Heart right ventricle (tissue), 16 donors: ENCODE measurements at regions of chr5 and their contacts with region 1.

Region 1: DNA sequence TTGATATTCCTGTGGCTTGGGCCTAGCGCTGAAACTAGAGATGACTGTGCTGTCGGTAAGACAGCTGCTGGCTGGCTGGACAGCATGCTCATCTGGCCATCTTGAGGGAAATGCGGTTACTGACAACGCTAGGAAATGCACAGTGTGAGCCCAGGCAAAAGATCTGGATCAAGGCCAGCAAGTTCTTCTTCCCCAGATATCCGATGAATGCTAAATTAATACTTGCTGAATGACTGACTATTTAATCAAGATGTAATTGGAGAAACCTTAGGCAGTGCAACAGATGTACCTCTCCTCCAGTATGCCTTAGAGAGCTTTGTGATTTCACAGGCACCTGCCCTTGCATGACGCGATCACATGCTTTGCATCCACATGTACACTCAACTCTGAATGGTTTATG is 659.1 kb downstream of the EFNA5 start:
- DNase-seq: no peak
- ATAC-seq: no peak
- H3K4me3 ChIP-seq: no peak overlapping the region
- H3K27ac ChIP-seq: no peak overlapping the region
- H3K4me1 ChIP-seq: no peaks in the 10 kb centered on the region
- H3K27me3 ChIP-seq: no peaks in the 10 kb centered on the region
- CTCF ChIP-seq: no peak

Region 2: GRCh38 chr5:106737111-106737510 is 274.5 kb before region 1 on chr5:
- intact Hi-C with region 1: loop called in 1 of 10 experiments (anchors 5 kb)
- DNase-seq: no peak
- ATAC-seq: no peak
- H3K4me3 ChIP-seq: no peak overlapping the region
- H3K27ac ChIP-seq: peak overlapping the region in 1 of 10 donors; percentile 32
- H3K4me1 ChIP-seq: peaks cover 0 to 4% (median 0%) of the 10 kb centered on the region in 9 donors
- H3K27me3 ChIP-seq: no peaks in the 10 kb centered on the region
- CTCF ChIP-seq: no peak

Region 3: GRCh38 chr5:107724642-107725041 is 713.0 kb after region 1 on chr5:
- intact Hi-C with region 1: no loop called
- DNase-seq: no peak
- ATAC-seq: no peak
- H3K4me3 ChIP-seq: no peak overlapping the region
- H3K27ac ChIP-seq: no peak overlapping the region
- H3K4me1 ChIP-seq: no peaks in the 10 kb centered on the region
- H3K27me3 ChIP-seq: no peaks in the 10 kb centered on the region
- CTCF ChIP-seq: no peak